A549 (cell line): ENCODE measurements at regions of chr11 and their contacts with region 1.

Region 1: DNA sequence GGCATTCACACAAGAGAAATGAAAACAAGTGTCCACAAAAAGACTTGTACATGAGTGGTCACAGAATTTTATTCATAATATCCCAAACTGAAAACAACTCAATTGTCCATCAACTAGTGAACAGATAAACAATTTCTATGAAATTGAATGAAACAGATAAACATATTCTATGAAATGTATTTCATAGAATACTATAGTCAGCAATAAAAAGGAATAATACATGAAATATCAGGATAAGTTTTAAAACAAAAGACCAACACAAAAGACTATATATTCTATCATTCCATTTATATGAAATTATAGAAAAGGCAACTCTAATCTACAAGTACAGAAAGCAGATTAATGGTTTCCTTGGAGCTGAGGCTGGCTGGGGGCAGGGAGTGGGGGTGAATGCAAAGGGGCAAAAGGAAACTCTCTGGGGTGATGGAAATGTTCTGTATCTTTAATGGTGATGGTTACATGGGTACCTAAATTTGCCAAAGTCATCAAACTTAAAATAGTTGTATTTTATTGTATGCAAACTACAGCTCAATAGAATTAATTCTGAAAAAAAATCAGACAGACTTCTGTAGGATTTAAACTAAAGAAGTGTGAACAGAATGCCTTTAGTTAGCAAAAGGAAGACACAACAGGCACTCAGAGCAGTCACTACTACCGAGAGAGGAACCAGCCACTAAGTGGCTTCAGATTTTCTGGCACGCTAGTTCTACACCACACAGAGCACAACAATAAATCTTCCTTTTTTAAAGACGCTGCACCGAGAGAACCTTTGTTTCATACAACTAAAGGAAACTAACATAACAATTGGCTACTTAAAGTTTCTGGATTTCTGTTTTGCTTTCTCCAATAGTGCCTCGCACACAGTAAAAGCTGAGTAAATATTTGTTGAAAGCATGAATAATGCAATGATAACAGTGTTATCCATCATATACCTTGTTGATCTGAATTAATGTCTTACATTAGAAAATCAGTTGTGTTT is 15.4 kb downstream of the CCDC34 start:
- DNase-seq: peak in 1 of 2 experiments; percentile 61
- ATAC-seq: peak; percentile 88 to 90
- H3K4me3 ChIP-seq: peak overlapping the region; percentile 21; the same call in 2 of the 3 replicates
- H3K27ac ChIP-seq: peak overlapping the region; percentile 76 to 79
- H3K4me1 ChIP-seq: peaks cover 52% of the 10 kb centered on the region
- CTCF ChIP-seq: no peak
- EP300 ChIP-seq: no peak
- POLR2A ChIP-seq: no peak
- RAD21 ChIP-seq: no peak

Region 2: DNA sequence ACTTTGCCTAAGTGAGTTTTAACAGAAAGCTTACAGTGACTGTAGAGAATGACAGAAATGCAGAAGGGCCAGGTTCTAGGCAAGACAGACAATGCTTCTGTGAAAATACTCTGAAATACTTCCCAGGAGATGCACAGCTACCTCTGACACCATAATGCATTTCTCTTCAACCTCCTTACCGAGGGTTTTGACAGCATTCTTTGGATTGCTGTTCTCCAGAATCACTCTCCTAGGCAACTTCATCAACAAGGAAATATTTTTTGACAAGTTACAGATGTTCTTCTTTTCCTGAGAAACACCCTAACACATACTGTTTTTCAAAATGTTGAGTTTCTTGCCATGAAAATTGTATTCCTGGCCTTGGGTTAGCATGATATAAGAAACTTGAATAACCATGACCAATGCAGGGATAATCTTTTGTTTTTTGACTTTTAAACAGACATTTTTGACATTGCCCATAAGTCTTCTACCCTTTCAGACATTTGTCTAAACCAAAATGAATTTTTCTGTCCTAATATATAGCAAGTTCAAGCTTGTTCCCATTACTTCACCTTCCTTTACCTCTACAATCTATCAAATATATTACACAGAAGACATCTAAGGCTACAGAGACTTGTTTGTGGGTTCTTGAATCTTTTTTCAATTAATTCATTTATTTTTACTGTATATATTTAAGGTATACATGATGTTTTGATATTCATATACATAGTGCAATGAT is 92.8 kb before region 1 on chr11:
- CTCF ChIA-PET with region 1: no interaction called
- POLR2A ChIA-PET with region 1: interaction called, 12 read pairs
- DNase-seq: no peak
- ATAC-seq: no peak
- H3K4me3 ChIP-seq: no peak overlapping the region
- H3K27ac ChIP-seq: no peak overlapping the region
- H3K4me1 ChIP-seq: no peaks in the 10 kb centered on the region
- CTCF ChIP-seq: no peak
- EP300 ChIP-seq: no peak
- POLR2A ChIP-seq: no peak
- RAD21 ChIP-seq: no peak